Transverse colon (tissue), 4 donors: ENCODE measurements at regions of chr9 and their contacts with region 1.

Region 1: DNA sequence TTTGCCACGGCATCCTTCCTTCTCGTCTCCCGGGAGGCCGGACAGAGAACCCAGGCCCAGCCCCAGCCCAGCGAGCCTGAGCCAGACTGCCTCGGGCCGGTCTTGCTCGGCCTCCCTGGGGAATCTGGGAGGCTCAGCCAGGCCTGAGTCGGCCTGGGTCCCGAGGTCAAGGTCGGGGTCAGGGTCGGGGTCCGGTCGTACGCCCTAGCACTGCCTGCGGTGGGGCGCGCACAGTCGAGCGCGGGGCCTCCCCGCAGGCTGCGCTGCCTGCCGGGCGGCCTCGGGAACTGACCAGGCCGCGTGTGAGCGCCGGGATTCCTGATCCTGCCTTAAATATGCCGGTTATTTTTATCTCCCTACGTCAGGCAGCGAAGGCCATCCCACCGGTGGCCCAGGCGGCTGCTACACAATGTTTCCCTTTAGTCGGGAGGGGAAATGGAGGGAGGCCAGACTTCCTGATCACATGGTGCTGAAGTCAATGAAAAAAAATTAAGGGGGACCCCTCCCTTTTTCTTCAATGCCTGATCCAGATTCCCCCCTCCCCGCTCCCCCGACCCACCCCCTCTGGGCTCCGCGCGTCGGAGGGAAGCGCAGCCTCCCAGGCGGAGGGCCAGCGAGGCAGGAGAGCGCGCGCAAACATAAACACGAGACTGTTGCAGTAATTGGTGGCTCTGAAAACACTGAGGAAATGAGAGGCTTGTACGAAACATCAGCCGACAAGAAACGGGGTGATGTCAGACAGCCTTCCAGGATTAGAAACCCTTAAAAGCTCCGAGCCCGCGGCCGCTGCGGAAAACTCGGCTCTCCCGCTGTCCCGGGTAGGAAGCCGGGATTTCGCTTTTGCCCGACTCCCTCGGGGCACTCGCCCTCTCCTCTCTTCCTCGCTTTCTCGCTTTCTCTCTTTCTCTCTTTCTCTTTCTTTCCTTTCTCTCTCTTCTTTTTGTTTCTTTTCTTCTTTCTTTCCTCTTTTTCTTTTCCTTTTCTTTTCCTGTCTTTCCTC is 148.2 kb upstream of the KLF4 start:
- DNase-seq: peak; percentile 80
- H3K4me3 ChIP-seq: peak overlapping the region; percentile 1 to 53 (median 38)
- H3K27ac ChIP-seq: peak overlapping the region; percentile 84 to 97 (median 92)
- H3K4me1 ChIP-seq: peaks cover 11 to 23% (median 17%) of the 10 kb centered on the region in 4 donors
- H3K27me3 ChIP-seq: no peaks in the 10 kb centered on the region
- CTCF ChIP-seq: peak in 2 of 5 experiments; percentile 21 to 22
- EP300 ChIP-seq: no peak
- POLR2A ChIP-seq: peak; percentile 90

Region 2: DNA sequence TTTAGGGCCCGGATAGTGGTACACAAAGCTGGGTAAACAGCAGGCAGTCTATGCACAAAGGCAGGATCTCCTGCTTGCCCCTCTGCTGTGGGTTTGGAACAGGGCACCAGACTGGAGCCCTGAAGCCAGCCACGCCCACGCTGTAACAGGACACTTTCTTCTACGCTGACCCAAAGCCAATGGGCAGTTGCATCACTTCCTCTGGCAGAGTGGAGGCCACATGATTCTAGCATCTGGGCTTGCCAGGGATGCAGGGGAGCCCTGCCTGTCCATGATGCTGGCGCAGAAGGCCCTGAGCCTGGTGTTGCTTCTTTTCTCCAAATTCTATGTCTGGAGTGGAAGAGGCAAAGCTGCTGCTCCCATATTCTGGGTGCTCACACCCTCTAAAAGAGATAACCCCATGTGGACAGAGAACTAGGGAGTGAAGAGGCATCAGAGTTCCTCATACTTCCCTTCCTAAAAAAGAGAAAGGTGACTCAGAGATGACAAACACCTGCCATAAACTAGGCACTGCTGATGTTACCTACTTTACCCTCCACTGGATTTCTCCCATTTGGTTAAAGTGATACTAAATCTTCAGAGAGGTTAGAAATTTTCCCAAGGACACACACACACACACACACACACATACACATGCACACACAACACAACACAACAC is 112.2 kb after region 1 on chr9:
- in situ Hi-C with region 1: no loop called
- intact Hi-C with region 1: loop called (anchors 2 kb)
- DNase-seq: peak; percentile 76
- H3K4me3 ChIP-seq: no peak overlapping the region
- H3K27ac ChIP-seq: peak overlapping the region; percentile 72 to 88 (median 80)
- H3K4me1 ChIP-seq: peaks cover 26 to 44% (median 27%) of the 10 kb centered on the region in 4 donors
- H3K27me3 ChIP-seq: no peaks in the 10 kb centered on the region
- CTCF ChIP-seq: no peak
- EP300 ChIP-seq: no peak
- POLR2A ChIP-seq: no peak

Region 3: DNA sequence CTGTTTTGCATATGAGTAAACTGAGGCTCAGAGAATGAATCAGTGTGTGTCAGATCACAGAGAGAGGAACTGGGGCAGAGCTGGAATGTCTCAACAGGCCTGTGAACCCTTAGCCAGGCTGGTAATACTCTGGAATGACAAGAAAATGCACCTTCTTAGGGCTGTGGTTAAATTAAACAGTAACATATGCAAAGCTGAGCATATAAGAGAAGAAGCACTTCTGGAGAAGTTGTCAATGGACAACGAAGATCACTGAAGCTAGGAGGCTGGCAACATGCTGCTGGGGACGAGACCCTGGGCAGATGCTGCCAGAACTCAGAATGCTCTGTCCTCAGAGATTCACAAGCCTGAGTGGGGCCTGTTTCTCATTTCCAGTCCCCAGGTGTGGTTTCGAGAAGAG is 1747.8 kb after region 1 on chr9:
- in situ Hi-C with region 1: no loop called
- intact Hi-C with region 1: loop called (anchors 5 kb)
- DNase-seq: no peak
- H3K4me3 ChIP-seq: no peak overlapping the region
- H3K27ac ChIP-seq: no peak overlapping the region
- H3K4me1 ChIP-seq: no peaks in the 10 kb centered on the region
- H3K27me3 ChIP-seq: no peaks in the 10 kb centered on the region
- CTCF ChIP-seq: no peak
- EP300 ChIP-seq: no peak
- POLR2A ChIP-seq: no peak